CD4-positive, alpha-beta memory T cell (primary cell): ENCODE measurements at regions of chr5 and their contacts with region 1.

Region 1: GRCh38 chr5:35651002-35651756 is 33.5 kb downstream of the SPEF2 start:
- DNase-seq: peak; percentile 64 to 69 (median 68)
- H3K4me3 ChIP-seq: no peak overlapping the region
- H3K4me3 Mint-ChIP-seq: no peak overlapping the region
- H3K27ac ChIP-seq: no peak overlapping the region
- H3K27ac Mint-ChIP-seq: peak overlapping the region in 6 of 7 donors; percentile 16 to 74 (median 56)
- H3K4me1 ChIP-seq: peaks cover 4% of the 10 kb centered on the region
- H3K4me1 Mint-ChIP-seq: peaks cover 5 to 18% (median 14%) of the 10 kb centered on the region in 4 donors
- H3K27me3 ChIP-seq: no peaks in the 10 kb centered on the region
- H3K27me3 Mint-ChIP-seq: no peaks in the 10 kb centered on the region

Region 2: GRCh38 chr5:35089334-35090314 is 561.6 kb before region 1 on chr5:
- CTCF ChIA-PET with region 1: interaction called, 8 read pairs
- POLR2A ChIA-PET with region 1: no interaction called
- intact Hi-C with region 1: loop called (anchors 2 kb)
- DNase-seq: peak; percentile 44 to 53 (median 46)
- H3K4me3 ChIP-seq: no peak overlapping the region
- H3K4me3 Mint-ChIP-seq: no peak overlapping the region
- H3K27ac ChIP-seq: no peak overlapping the region
- H3K27ac Mint-ChIP-seq: peak overlapping the region in 1 of 7 donors; percentile 32
- H3K4me1 ChIP-seq: no peaks in the 10 kb centered on the region
- H3K4me1 Mint-ChIP-seq: no peaks in the 10 kb centered on the region
- H3K27me3 ChIP-seq: no peaks in the 10 kb centered on the region
- H3K27me3 Mint-ChIP-seq: peaks cover 4 to 5% of the 10 kb centered on the region in 2 donors

Region 3: DNA sequence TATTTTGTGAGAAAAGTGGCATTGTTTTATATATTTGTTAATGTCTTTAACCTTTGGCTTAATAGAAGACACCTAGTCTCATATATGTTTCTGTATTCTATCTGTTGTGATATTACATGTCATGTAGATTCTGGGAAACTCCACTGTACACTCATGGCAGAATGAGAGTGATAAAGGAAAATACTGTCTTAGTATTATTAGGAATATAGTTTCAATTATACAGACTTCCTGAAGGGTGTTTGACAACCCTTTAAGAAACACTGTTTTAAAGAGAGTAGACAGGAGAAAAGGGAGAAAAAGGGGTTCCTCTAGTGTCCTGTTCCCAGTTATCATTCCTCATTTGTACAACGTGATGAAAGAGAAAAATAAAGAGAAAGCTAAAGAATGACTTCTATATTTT is 75.6 kb before region 1 on chr5:
- CTCF ChIA-PET with region 1: no interaction called
- POLR2A ChIA-PET with region 1: no interaction called
- intact Hi-C with region 1: no loop called
- DNase-seq: no peak
- H3K4me3 ChIP-seq: no peak overlapping the region
- H3K4me3 Mint-ChIP-seq: no peak overlapping the region
- H3K27ac ChIP-seq: no peak overlapping the region
- H3K27ac Mint-ChIP-seq: no peak overlapping the region
- H3K4me1 ChIP-seq: no peaks in the 10 kb centered on the region
- H3K4me1 Mint-ChIP-seq: no peaks in the 10 kb centered on the region
- H3K27me3 ChIP-seq: no peaks in the 10 kb centered on the region
- H3K27me3 Mint-ChIP-seq: peaks cover 9 to 14% of the 10 kb centered on the region in 2 donors

Region 4: GRCh38 chr5:35640623-35641022 is 10.6 kb before region 1 on chr5:
- CTCF ChIA-PET with region 1: interaction called, 12 read pairs
- POLR2A ChIA-PET with region 1: no interaction called
- intact Hi-C with region 1: no loop called
- DNase-seq: no peak
- H3K4me3 ChIP-seq: no peak overlapping the region
- H3K4me3 Mint-ChIP-seq: no peak overlapping the region
- H3K27ac ChIP-seq: no peak overlapping the region
- H3K27ac Mint-ChIP-seq: no peak overlapping the region
- H3K4me1 ChIP-seq: no peaks in the 10 kb centered on the region
- H3K4me1 Mint-ChIP-seq: no peaks in the 10 kb centered on the region
- H3K27me3 ChIP-seq: no peaks in the 10 kb centered on the region
- H3K27me3 Mint-ChIP-seq: no peaks in the 10 kb centered on the region

Region 5: GRCh38 chr5:35672995-35673394 is 21.8 kb after region 1 on chr5:
- CTCF ChIA-PET with region 1: interaction called, 14 read pairs
- POLR2A ChIA-PET with region 1: interaction called, 5 read pairs
- intact Hi-C with region 1: no loop called
- DNase-seq: peak; percentile 32 to 63 (median 54)
- H3K4me3 ChIP-seq: no peak overlapping the region
- H3K4me3 Mint-ChIP-seq: peak overlapping the region in 7 of 8 donors; percentile 31 to 76 (median 47)
- H3K27ac ChIP-seq: peak overlapping the region; percentile 7
- H3K27ac Mint-ChIP-seq: peak overlapping the region; percentile 68 to 92 (median 86)
- H3K4me1 ChIP-seq: peaks cover 58% of the 10 kb centered on the region
- H3K4me1 Mint-ChIP-seq: peaks cover 43 to 68% (median 54%) of the 10 kb centered on the region in 4 donors
- H3K27me3 ChIP-seq: no peaks in the 10 kb centered on the region
- H3K27me3 Mint-ChIP-seq: no peaks in the 10 kb centered on the region

Region 6: DNA sequence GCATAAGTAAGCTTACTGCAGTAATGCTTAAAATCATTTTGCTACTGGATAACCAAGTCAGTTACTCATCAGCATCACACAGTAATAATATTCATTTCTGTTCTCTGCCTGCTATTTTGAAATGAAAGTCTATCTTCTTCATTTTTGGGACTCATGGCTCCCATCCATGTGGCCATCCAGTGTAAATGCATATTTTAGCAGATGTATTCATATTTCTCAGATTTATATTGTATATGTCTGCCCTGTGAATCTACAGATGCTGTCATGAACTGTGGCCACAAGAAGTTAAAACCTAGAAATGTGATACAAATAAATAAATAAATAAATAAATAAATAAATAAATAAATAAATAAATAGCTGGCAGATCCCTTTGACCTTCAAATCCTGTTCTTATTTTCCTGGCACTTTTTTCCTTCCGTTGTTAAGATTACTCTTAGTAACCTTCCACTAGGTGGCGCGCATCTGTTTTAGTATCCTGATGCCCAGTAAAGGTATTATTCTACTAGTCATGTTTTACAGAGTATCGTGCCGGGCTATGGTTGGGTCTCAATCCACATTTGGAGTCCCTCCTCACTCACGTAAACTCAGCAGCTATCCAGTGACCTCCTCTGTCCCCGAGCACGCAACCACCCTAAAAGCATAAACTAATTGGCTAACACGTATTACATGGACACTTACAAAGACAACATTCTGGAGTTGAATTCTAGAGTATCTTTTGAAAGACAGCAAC is 126.3 kb after region 1 on chr5:
- CTCF ChIA-PET with region 1: interaction called, 55 read pairs
- POLR2A ChIA-PET with region 1: interaction called, 3 read pairs
- intact Hi-C with region 1: loop called (anchors 1 kb)
- DNase-seq: peak; percentile 71 to 76 (median 75)
- H3K4me3 ChIP-seq: no peak overlapping the region
- H3K4me3 Mint-ChIP-seq: peak overlapping the region; percentile 75 to 86 (median 83)
- H3K27ac ChIP-seq: peak overlapping the region; percentile 54
- H3K27ac Mint-ChIP-seq: peak overlapping the region; percentile 81 to 98 (median 96)
- H3K4me1 ChIP-seq: peaks cover 73% of the 10 kb centered on the region
- H3K4me1 Mint-ChIP-seq: peaks cover 57 to 84% (median 69%) of the 10 kb centered on the region in 4 donors
- H3K27me3 ChIP-seq: no peaks in the 10 kb centered on the region
- H3K27me3 Mint-ChIP-seq: no peaks in the 10 kb centered on the region

Region 7: DNA sequence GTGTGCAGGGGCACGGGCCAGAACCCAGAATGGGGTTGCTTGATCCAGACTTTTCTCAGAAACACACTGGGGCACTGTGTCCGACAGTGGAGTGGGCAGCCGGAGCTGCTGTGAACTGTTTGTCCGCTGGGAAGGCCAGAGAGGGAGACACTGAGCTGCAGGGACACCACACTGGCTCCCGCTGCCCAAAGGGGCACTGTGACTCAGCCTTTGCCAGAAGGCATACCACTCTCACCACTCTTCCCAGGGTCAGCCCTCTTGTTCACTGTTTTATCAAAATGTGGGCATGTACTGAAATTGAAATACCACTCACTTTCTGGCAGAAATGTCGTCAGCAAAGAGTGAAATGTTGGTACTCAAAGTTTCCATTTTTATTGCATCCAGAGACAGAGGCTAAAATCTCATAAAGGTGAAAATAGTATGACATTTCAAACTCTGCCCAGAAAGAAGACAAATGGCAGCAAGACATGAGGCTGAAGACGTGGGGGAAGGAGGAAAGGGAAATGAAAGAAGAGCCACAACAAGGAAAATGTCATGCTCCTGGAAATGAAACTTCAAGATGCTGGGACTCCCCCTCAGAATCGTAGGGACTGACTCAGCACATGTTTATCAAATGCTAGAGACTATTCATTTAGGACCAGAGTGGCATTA is 201.0 kb after region 1 on chr5:
- CTCF ChIA-PET with region 1: interaction called, 22 read pairs
- POLR2A ChIA-PET with region 1: interaction called, 10 read pairs
- intact Hi-C with region 1: no loop called
- DNase-seq: peak; percentile 60 to 81 (median 62)
- H3K4me3 ChIP-seq: peak overlapping the region; percentile 54 to 71
- H3K4me3 Mint-ChIP-seq: peak overlapping the region; percentile 87 to 99 (median 95)
- H3K27ac ChIP-seq: peak overlapping the region; percentile 97
- H3K27ac Mint-ChIP-seq: peak overlapping the region; percentile 94 to 100 (median 100)
- H3K4me1 ChIP-seq: peaks cover 75% of the 10 kb centered on the region
- H3K4me1 Mint-ChIP-seq: peaks cover 52 to 85% (median 70%) of the 10 kb centered on the region in 4 donors
- H3K27me3 ChIP-seq: no peaks in the 10 kb centered on the region
- H3K27me3 Mint-ChIP-seq: no peaks in the 10 kb centered on the region

Region 8: GRCh38 chr5:35876921-35877320 is 225.7 kb after region 1 on chr5:
- CTCF ChIA-PET with region 1: interaction called, 15 read pairs
- POLR2A ChIA-PET with region 1: interaction called, 57 read pairs
- intact Hi-C with region 1: no loop called
- DNase-seq: no peak
- H3K4me3 ChIP-seq: no peak overlapping the region
- H3K4me3 Mint-ChIP-seq: peak overlapping the region in 4 of 8 donors; percentile 3 to 58 (median 31)
- H3K27ac ChIP-seq: peak overlapping the region; percentile 16
- H3K27ac Mint-ChIP-seq: peak overlapping the region; percentile 53 to 89 (median 73)
- H3K4me1 ChIP-seq: peaks cover 57% of the 10 kb centered on the region
- H3K4me1 Mint-ChIP-seq: peaks cover 61 to 81% (median 71%) of the 10 kb centered on the region in 4 donors
- H3K27me3 ChIP-seq: no peaks in the 10 kb centered on the region
- H3K27me3 Mint-ChIP-seq: no peaks in the 10 kb centered on the region